ENCODE measurements at regions of chr17 and their contacts with region 1.

Region 1: DNA sequence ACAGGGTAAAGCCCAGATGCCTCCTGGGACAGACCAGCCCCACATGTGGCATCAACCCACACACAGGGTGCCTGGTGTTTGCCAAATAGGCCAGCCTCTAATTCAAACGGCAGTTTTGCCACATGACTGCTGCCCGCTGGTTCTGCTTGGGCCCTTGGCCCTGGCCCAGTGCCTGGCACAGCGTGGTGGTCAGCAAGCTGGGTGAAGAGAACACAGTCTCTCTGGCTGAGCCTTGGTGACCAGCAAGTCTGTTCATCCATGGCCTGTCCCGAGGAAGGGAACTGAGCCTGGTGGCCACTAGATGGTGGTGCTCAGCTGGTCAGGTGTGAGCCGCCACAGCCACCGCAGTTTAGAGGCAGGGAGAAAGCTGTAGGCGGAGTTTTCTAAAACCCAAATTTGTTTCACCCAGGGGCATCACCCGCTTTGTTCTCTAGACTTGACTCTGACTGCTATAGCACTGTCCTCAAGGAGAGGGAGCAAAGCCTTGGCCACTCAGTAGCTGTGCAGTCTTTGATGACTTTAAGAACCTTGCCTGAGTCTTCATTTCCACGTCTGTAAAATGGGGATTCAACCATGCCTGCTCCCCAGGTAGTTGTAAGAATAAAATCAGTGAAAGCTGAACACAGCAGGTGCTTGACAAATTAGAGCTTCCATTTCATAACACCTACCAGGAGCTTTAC is 4.7 kb upstream of the GFAP start:
- DNase-seq: peak; percentile 72 to 93 (median 80)
- ATAC-seq: peak; percentile 80 to 93 (median 92)
- H3K4me3 ChIP-seq: no peak overlapping the region
- H3K27ac ChIP-seq: no peak overlapping the region
- H3K4me1 ChIP-seq: no peaks in the 10 kb centered on the region
- H3K27me3 ChIP-seq: no peaks in the 10 kb centered on the region
- CTCF ChIP-seq: peak; percentile 35 to 81 (median 72)

Region 2: GRCh38 chr17:44832805-44833204 is 87.2 kb before region 1 on chr17:
- intact Hi-C with region 1: no loop called
- DNase-seq: no peak
- ATAC-seq: no peak
- H3K4me3 ChIP-seq: no peak overlapping the region
- H3K27ac ChIP-seq: no peak overlapping the region
- H3K4me1 ChIP-seq: peaks cover 0 to 4% (median 0%) of the 10 kb centered on the region in 3 donors
- H3K27me3 ChIP-seq: peaks cover 0 to 33% (median 5%) of the 10 kb centered on the region in 4 donors
- CTCF ChIP-seq: no peak

Region 3: DNA sequence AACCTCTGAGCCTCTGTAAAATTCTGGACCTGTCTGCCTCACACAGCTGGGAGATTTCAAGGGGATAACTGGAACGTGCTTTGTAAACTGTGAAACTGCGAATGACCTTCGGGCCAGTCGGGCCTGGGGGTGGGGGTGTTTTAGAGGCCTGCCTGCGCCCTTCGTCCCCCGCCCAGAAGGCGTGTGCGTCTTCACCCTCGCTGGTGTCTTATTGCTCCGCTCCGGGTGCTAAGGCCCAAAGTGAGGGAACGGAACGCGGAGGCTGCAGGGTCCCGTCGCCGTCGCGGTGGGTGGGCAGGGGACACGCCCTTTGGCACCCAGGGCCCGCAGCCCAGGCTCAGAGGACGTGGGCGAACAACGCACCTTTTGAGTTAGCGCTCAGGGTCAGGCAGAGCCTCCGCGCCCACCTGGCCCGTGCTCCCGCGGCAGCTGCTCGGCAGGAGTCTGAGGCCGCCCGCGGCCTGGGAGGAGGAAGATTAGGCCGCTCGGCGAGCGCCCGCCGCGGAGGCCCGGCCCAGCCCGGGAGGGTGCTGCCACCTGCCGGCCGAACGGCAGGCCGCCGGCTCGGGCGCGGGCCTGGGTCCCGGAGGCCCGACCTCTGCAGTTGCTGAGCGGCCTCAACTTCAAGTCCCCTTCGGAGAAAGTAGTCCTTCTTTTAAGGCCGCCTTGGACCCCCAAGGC is 101.7 kb after region 1 on chr17:
- intact Hi-C with region 1: loop called (anchors 5 to 10 kb)
- DNase-seq: peak; percentile 62 to 94 (median 78)
- ATAC-seq: peak; percentile 87 to 89 (median 88)
- H3K4me3 ChIP-seq: peak overlapping the region; percentile 18 to 52 (median 36)
- H3K27ac ChIP-seq: peak overlapping the region; percentile 60 to 77 (median 72)
- H3K4me1 ChIP-seq: peaks cover 18 to 25% (median 19%) of the 10 kb centered on the region in 3 donors
- H3K27me3 ChIP-seq: no peaks in the 10 kb centered on the region
- CTCF ChIP-seq: peak; percentile 93

Region 4: DNA sequence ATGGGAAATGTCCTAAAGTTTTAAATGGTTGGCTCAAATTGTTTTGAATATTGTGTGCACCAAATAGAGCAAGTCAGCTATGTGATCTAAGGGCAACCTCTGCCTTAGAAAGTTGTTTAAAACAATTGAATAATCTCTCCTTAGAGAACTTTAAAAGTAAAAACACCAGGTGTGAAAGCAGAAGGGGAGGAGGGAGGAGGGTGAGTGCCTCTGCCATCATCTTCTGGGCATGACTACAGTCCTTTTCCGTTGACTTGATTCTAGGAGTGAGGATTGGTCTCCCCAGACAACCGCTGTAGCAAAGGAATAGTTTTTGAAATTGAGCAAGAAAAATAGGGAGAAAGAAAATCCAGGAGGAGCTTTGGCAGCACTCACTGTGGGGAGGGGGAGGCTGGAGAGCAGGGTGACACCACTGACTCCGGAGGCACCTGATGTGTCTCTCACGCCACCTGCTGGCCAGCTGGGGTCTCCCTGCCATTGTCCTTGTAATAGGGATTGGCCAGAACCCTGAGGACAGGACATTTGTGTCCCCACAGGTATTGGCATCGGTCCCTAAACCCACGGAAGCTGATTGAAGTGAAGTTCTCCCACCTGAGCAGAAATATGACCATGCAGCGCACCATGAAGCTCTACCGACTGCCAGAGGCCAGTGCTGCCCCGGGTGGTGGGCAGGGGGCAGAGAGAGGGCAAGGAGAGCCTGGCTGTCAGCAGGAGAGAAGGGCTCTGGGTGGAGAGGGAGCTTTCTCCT is 179.0 kb after region 1 on chr17:
- intact Hi-C with region 1: loop called in 1 of 3 experiments (anchors 10 kb)
- DNase-seq: peak; percentile 69 to 93 (median 85)
- ATAC-seq: peak; percentile 90 to 97 (median 95)
- H3K4me3 ChIP-seq: no peak overlapping the region
- H3K27ac ChIP-seq: no peak overlapping the region
- H3K4me1 ChIP-seq: no peaks in the 10 kb centered on the region
- H3K27me3 ChIP-seq: no peaks in the 10 kb centered on the region
- CTCF ChIP-seq: peak; percentile 59 to 83 (median 74)

Region 5: GRCh38 chr17:45110668-45111611 is 190.9 kb after region 1 on chr17:
- intact Hi-C with region 1: loop called in 1 of 3 experiments (anchors 10 kb)
- DNase-seq: no peak
- ATAC-seq: peak in 2 of 4 donors; percentile 28 to 29
- H3K4me3 ChIP-seq: no peak overlapping the region
- H3K27ac ChIP-seq: no peak overlapping the region
- H3K4me1 ChIP-seq: no peaks in the 10 kb centered on the region
- H3K27me3 ChIP-seq: no peaks in the 10 kb centered on the region
- CTCF ChIP-seq: no peak